ENCODE measurements at regions of chr3 and their contacts with region 1.

Region 1: DNA sequence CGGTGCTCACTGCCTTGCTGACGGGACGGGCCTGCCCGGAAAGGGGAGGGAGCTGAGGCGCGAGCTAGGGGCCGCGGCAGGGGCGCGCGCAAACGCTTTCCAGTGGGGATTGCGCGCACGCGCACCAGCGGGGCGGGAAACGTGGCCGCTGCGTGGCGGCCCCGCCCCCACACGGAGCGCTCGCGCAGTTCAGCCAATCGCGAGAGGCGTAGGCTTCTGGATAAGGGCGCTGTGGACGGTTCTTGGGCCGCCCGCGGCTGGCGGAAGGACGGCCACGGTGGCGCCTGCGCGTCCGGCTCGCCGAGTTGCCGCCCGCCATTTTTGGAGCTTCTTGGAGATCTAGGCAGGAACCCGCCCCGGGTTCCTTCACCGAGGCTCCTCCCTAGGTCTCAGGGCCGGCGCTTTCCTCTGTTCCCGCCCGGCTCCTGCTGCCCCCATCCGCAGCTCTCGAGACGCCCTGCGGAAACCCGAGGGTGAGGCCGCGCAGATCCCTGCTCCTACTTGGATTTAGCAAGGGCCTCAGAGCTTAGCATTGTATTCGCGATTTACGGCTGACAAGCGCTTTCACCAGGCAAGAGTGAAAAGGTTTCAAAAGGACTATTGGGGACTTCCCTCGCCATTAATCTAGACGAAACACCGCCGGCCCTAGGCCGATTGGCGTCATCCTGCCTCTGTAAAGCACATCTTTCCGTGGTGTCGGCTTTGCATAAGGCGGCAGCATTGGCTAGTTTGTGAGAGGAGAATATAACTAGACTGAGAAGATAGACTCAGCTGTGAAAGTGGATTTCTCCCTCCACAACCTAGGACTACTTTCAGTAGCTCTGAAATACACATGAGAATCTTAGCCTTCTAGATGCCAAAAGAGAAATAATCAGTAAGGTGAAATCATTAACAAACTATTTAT is 496 bp upstream of the STAG1 start:
- DNase-seq: peak; percentile 98 to 99
- H3K4me3 ChIP-seq: peak overlapping the region in 2 of 3 donors; percentile 20 to 37
- H3K27ac ChIP-seq: peak overlapping the region; percentile 93 to 99 (median 98)
- H3K4me1 ChIP-seq: peaks cover 16 to 35% of the 10 kb centered on the region in 2 donors
- H3K27me3 ChIP-seq: no peaks in the 10 kb centered on the region
- CTCF ChIP-seq: peak in 4 of 6 experiments; percentile 37 to 100 (median 45)
- POLR2A ChIP-seq: peak in 1 of 2 donors; percentile 89

Region 2: DNA sequence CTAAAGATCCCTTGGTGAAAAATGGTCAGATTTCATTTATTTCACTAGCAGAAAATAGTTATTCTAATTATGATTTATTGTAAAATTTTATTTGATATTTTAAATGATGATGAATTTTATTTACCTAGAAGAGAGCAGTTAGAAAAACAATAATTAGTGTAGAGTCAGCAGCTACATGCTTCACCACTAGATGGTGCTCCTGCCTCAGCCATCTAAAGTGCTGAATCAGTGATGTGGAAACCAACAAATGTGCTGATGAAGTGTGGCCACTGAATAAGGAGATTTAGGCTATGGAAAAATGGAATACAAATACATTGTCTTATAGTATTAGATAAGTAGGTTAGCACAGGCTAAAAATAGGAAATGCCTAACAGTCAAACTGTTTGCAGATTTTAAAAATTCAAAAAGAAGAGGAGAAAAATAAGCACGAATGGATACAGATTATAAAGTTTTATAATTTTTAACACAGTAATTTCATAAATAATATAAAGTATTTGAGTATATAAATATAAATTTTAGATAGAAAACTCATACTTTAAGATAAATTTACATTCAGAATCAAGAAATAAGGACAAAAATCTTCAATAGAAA is 677.4 kb before region 1 on chr3:
- intact Hi-C with region 1: loop called (anchors 5 kb)
- DNase-seq: peak; percentile 69 to 77
- H3K4me3 ChIP-seq: no peak overlapping the region
- H3K27ac ChIP-seq: no peak overlapping the region
- H3K4me1 ChIP-seq: peaks cover 0 to 9% of the 10 kb centered on the region in 2 donors
- H3K27me3 ChIP-seq: no peaks in the 10 kb centered on the region
- CTCF ChIP-seq: peak; percentile 63 to 99 (median 91)
- POLR2A ChIP-seq: no peak

Region 3: DNA sequence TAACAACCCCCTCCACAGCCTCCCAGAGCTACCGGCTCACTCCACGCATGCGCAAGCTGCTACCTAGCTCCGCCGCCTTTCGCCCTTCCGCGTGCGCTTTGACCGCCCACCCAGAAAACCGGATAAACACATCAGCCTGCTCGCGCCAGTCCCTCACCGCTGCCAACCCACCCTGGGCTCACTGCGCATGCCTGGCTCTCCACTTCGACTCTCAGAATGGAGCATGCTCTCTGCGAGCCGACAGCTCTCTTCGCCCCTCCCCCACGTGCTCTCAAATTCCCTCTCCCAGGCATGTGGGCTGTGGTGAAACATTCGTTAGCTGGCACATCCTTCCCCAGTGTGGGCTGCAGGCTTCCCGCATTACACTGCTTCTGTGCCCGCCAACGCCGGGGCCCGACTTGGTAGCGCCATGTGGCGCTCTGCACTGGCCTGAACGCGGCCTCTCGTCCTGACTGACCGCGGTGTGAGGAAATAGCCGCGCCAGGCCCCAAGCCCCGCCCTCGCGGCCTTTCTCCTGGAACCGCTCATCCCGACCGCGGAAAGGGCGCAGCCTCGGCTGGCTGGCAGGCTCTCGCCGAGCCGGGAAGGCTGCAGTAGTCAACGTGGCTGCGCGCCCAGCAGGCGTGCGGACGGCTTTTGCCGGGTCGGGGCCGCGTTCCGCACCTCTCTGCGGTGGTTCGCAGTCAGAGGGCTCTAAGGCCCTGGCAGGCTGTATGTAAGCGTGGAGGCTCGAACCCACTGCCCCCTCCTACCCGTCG is 556.1 kb before region 1 on chr3:
- intact Hi-C with region 1: loop called (anchors 10 kb)
- DNase-seq: peak; percentile 99
- H3K4me3 ChIP-seq: peak overlapping the region in 2 of 3 donors; percentile 72 to 78
- H3K27ac ChIP-seq: peak overlapping the region; percentile 99 to 100 (median 100)
- H3K4me1 ChIP-seq: peaks cover 23% of the 10 kb centered on the region in 2 donors
- H3K27me3 ChIP-seq: no peaks in the 10 kb centered on the region
- CTCF ChIP-seq: no peak
- POLR2A ChIP-seq: peak; percentile 11 to 89

Region 4: DNA sequence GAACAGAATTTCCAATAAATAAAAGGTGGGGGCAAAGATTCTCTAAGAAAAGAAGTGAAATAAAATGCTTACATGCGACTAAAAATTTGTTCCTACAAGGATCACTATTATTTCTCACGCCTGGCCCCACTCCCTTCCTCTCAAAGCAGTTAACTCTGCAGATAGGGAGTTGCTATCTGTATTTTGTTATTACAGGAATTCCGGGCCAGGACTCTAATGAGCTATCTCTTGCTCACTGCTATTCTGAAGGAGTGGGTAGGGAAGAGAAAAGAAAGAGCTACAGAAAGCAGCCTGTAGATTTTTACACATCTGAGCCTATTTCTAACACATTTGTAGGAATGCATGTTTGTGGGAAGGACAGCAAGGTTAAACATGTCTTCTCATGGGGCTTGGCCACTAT is 362.1 kb before region 1 on chr3:
- intact Hi-C with region 1: loop called (anchors 5 kb)
- DNase-seq: no peak
- H3K4me3 ChIP-seq: no peak overlapping the region
- H3K27ac ChIP-seq: no peak overlapping the region
- H3K4me1 ChIP-seq: no peaks in the 10 kb centered on the region
- H3K27me3 ChIP-seq: no peaks in the 10 kb centered on the region
- CTCF ChIP-seq: no peak
- POLR2A ChIP-seq: no peak

Region 5: DNA sequence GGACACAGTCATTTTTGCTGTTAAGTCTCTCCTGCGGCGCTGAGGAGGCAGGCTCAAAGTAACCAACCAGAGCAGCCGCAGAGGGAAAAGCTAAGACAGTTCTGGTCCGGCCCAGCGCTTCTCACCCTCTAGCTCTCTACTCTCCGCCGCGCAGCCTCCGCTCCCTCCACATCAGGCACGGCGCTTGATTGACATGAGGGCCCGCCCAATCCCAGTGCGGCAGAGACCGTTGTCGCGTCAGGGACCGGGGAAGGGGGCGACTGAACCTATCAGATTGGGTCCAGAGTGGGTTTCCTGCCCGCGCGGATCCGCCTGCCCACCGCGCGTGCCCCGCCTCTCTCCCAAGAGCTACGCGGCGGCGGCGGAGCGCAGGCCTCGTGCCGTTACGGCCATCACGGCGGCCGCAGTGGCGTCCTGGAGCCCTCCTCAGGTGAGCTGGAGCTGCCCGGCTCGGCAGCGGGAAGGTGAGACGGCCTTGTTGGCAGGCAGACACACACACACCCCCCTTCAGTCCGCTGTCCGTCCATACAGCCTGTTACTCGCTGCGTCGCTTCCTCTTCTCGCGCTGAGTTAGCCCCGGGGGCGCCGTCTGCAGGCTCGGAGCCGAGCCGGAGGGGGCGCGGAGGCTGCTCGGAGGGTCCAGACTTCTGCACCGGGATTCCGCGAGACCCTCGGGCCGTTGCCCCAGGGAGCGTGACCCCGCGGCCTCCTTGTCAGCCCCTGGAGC is 109.4 kb after region 1 on chr3 and contains the start of gene NCK1:
- intact Hi-C with region 1: loop called (anchors 5 kb)
- DNase-seq: peak; percentile 99
- H3K4me3 ChIP-seq: peak within 1 kb of the TSS; percentile 38 to 80 (median 68)
- H3K27ac ChIP-seq: peak within 1 kb of the TSS; percentile 90 to 95 (median 94)
- H3K4me1 ChIP-seq: peaks cover 9 to 14% of the 10 kb centered on the region in 2 donors
- H3K27me3 ChIP-seq: no peaks in the 10 kb centered on the region
- CTCF ChIP-seq: peak in 3 of 6 experiments; percentile 7 to 18 (median 11)
- POLR2A ChIP-seq: peak; percentile 61 to 98
- total RNA-seq, gene NCK1: 46.1 to 64.4 (median 47.0) TPM

Region 6: DNA sequence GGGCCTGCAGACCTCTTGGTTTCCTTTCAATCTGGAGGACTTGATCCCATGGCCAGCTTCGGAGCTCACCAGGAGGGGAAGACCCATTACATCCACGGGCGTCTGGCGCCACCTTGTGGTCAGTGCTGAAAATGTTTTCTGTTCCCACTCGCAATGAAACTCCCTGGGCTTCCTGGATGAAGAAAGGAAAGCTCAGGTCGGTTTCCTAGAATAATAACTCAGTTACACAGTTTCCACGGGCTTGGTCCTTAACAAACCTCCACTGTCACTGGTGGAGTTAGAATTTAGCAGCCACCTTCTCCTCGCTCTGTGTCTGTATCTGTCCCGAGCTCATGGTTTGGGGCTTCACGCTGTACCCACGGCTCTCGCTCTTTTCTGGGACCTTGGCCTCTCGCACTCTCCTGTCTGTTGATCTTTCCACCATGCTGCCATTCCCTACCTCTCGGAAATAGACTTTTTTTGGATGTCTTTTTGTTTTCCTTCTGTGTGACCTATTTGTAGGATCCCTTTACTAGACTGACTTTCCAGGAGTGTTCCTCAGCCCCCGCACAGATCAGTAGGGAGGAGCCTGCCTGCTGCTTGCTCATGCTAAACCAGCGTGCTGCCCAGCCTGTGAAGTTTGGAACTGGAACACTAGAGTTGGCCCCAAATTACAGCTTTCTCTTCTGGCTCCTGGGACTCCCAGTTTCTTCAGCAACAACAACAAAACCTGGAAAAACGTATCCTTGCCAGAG is 261.4 kb after region 1 on chr3:
- intact Hi-C with region 1: loop called (anchors 5 kb)
- DNase-seq: peak; percentile 88 to 93
- H3K4me3 ChIP-seq: peak overlapping the region in 2 of 3 donors; percentile 0 to 26
- H3K27ac ChIP-seq: peak overlapping the region; percentile 34 to 69 (median 50)
- H3K4me1 ChIP-seq: no peaks in the 10 kb centered on the region
- H3K27me3 ChIP-seq: no peaks in the 10 kb centered on the region
- CTCF ChIP-seq: peak; percentile 52 to 95 (median 86)
- POLR2A ChIP-seq: no peak